ENCODE measurements at regions of chr13 and their contacts with region 1.

Region 1: DNA sequence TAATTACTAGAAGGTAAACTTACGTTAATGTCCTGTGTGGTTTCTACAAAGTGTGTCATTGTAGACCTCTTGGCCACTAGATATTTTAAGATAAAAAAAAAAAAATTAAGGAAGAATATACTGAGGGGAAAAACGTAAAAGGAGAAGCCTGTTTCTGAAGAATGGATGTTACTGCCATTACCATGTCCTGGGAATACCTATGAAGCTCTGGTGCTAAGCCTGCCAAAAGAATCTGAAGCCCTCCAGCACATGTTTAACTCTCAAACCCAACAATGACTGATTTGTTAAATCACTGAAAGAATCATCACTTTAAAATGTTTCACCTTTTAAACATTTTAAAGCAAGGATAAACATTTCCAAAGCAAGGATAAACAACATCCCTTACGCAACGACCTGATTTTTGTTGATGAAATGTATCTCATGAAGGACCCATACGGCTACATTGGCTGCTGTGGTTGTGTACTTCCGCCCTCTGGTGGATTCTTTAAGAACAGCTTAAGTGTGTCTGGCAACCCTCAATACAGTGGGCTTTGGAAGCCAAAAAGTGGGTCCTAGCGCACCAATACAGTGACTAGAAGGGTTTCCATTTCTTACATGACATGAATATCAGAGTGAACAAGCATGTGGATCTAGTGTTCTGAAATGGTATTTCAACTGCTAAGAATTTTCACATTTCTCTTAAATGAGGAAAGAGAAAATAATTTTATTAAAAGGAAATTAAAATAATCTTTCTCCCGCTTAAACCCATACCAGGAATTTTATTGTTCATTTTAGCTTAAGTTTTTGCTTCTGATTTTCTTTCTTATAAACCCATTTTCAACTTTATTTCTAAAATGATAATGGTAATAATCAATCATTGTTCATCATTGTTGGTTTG is 74.5 kb upstream of the RAP2A start:
- DNase-seq: peak; percentile 44 to 85 (median 57)
- H3K4me3 ChIP-seq: no peak overlapping the region
- H3K27ac ChIP-seq: peak overlapping the region in 1 of 5 donors; percentile 26
- H3K4me1 ChIP-seq: peaks cover 0 to 27% of the 10 kb centered on the region in 2 donors
- H3K27me3 ChIP-seq: no peaks in the 10 kb centered on the region
- CTCF ChIP-seq: peak; percentile 81 to 94 (median 86)
- POLR2A ChIP-seq: no peak

Region 2: DNA sequence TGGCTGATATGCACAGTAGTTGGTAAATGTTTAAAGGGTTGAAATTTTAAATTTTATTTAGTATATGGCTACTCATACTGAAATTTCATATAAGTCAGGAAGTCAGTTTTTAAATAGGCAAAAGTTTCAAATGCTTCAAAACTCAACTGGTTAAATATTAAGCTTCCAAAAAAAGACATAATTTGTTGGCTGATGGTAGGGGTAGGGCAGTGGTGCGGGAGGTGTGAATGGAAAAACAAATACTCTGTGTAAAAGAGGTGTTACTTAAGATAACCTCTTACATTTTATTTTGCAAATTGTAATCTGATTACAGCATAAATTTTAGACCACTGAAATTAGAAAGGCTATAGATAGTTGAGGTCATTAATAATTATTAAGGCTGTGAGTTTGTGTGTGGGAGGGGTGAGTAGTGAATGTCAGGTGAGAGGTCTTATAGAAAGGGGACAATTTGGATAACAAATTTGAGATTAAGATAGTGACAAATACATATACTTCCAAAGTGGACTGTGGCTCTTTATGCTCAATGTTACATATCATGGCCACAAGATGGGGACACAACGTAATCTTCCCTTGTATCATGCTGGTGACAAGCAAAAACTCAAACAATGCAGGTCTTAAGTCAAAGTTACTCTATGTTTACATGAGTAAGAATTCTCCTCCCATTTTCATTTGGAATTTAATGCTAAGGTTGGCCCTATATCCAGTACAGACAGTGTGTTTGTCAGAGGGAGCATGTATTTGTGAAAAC is 328.5 kb before region 1 on chr13:
- intact Hi-C with region 1: loop called in 1 of 2 experiments (anchors 10 kb)
- DNase-seq: peak in 1 of 7 donors; percentile 29
- H3K4me3 ChIP-seq: no peak overlapping the region
- H3K27ac ChIP-seq: no peak overlapping the region
- H3K4me1 ChIP-seq: peaks cover 0 to 6% of the 10 kb centered on the region in 2 donors
- H3K27me3 ChIP-seq: peaks cover 3% of the 10 kb centered on the region
- CTCF ChIP-seq: peak in 5 of 6 experiments; percentile 35 to 46 (median 40)
- POLR2A ChIP-seq: no peak

Region 3: GRCh38 chr13:97221989-97222700 is 137.3 kb before region 1 on chr13 and contains the start of gene MBNL2:
- intact Hi-C with region 1: loop called (anchors 5 to 10 kb)
- DNase-seq: peak; percentile 91 to 97 (median 94)
- H3K4me3 ChIP-seq: peak within 1 kb of the TSS; percentile 44 to 87 (median 72)
- H3K27ac ChIP-seq: peak within 1 kb of the TSS; percentile 66 to 97 (median 94)
- H3K4me1 ChIP-seq: peaks cover 18 to 31% of the 10 kb centered on the region in 2 donors
- H3K27me3 ChIP-seq: no peaks in the 10 kb centered on the region
- CTCF ChIP-seq: no peak
- POLR2A ChIP-seq: peak; percentile 79 to 98
- total RNA-seq, gene MBNL2: 56.2 to 250 (median 143) TPM

Measured in adrenal gland (tissue), 19 donors.